OCI-LY7 (cell line): ENCODE measurements at regions of chr16 and their contacts with region 1.

Region 1: DNA sequence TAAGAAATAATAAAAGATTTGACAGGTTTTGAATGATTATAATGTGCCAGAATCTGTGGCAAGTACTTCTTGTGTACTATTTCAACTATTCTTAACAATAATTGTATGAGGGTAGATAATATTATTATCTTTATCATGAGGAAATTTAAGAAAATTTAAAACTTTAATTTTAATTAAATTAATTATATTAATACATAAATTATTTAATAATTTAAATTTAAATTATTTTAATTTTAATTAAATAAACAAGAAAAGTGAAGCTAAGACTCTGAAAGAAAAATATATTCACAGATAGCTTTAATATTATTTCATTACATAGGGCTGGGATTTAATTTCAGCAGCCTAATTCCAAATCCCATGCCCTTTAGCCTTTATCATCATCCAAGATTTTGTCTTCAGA is 31.4 kb upstream of the NETO2 start:
- DNase-seq: no peak
- H3K4me3 ChIP-seq: no peak overlapping the region
- H3K27ac ChIP-seq: no peak overlapping the region
- H3K4me1 ChIP-seq: no peaks in the 10 kb centered on the region
- CTCF ChIP-seq: no peak

Region 2: GRCh38 chr16:47197536-47198179 is 22.5 kb after region 1 on chr16:
- CTCF ChIA-PET with region 1: no interaction called
- POLR2A ChIA-PET with region 1: no interaction called
- intact Hi-C with region 1: no loop called
- DNase-seq: no peak
- H3K4me3 ChIP-seq: no peak overlapping the region
- H3K27ac ChIP-seq: no peak overlapping the region
- H3K4me1 ChIP-seq: no peaks in the 10 kb centered on the region
- CTCF ChIP-seq: no peak

Region 3: GRCh38 chr16:47687694-47688093 is 512.5 kb after region 1 on chr16:
- CTCF ChIA-PET with region 1: no interaction called
- POLR2A ChIA-PET with region 1: interaction called, 10 read pairs
- intact Hi-C with region 1: no loop called
- DNase-seq: no peak
- H3K4me3 ChIP-seq: no peak overlapping the region
- H3K27ac ChIP-seq: no peak overlapping the region
- H3K4me1 ChIP-seq: no peaks in the 10 kb centered on the region
- CTCF ChIP-seq: no peak